ENCODE measurements at regions of chr14 and their contacts with region 1.

Region 1: DNA sequence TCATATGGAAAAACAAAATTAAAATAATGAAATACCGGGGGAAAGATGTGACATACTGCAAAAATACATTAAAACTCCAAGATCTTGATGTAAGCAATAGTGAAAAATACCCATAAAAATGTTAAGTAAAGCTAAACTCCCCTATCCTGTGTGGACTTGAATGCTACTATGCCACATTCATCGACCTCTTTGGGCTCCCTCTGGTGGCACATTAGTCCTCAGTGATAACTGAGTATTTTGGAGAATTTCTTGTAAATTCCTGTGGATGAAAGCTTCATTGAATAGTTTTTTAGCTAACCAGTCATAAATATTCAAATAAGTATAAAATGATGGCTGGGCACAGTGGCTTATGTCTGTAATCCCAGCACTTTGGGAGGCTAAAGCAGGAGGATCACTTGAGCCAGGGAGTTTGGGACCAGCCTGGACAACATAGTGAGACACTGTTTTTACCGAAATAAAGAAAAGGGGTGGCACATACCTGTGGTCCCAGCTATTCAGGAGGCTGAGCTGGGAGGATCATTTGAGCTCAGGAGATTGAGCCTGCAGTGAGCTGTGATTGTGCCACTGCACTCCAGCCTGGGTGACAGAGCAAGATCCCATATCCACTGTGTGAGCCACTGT is 42.4 kb upstream of the SGPP1 start:
- DNase-seq: peak in 1 of 2 experiments; percentile 61
- ATAC-seq: peak; percentile 93 to 96
- H3K4me3 ChIP-seq: no peak overlapping the region
- H3K27ac ChIP-seq: no peak overlapping the region
- H3K4me1 ChIP-seq: peaks cover 5% of the 10 kb centered on the region; the same call in 1 of the 3 replicates
- CTCF ChIP-seq: peak; percentile 79
- EP300 ChIP-seq: no peak
- POLR2A ChIP-seq: no peak
- RAD21 ChIP-seq: peak; percentile 74 to 77

Region 2: GRCh38 chr14:63388763-63389431 is 381.4 kb before region 1 on chr14:
- CTCF ChIA-PET with region 1: interaction called, 10 read pairs
- POLR2A ChIA-PET with region 1: no interaction called
- DNase-seq: peak; percentile 20 to 65
- ATAC-seq: peak; percentile 94 to 98
- H3K4me3 ChIP-seq: no peak overlapping the region
- H3K27ac ChIP-seq: no peak overlapping the region
- H3K4me1 ChIP-seq: no peaks in the 10 kb centered on the region
- CTCF ChIP-seq: peak; percentile 86
- EP300 ChIP-seq: no peak
- POLR2A ChIP-seq: no peak
- RAD21 ChIP-seq: peak; percentile 91 to 92

Region 3: DNA sequence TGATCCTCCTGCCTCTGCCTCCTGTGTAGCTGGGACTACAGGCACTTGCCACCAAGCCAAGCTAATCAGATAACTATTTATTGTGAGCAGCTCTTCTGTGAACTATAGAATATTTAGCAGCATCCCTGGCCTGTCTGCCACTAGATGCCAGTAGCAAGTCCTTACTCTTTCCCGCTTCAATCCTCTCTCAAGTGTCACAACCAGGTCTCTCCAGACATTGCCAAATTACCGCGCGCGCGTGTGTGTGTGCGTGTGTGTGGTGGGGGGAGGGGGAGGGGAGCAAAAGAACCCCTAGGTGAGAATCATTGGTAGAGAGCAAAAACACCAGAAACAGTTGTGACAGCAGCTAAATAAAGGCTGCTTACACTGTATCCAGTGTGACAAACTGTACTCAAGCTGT is 277.1 kb before region 1 on chr14:
- CTCF ChIA-PET with region 1: interaction called, 3 read pairs
- POLR2A ChIA-PET with region 1: interaction called, 10 read pairs
- DNase-seq: peak in 1 of 2 experiments; percentile 72
- ATAC-seq: peak; percentile 89 to 91
- H3K4me3 ChIP-seq: no peak overlapping the region
- H3K27ac ChIP-seq: peak overlapping the region in 1 of 2 experiments; percentile 25; a peak in 1 of 6 replicates
- H3K4me1 ChIP-seq: peaks cover 29% of the 10 kb centered on the region
- CTCF ChIP-seq: peak; percentile 26; the same call in 2 of the 3 replicates
- EP300 ChIP-seq: no peak
- POLR2A ChIP-seq: no peak
- RAD21 ChIP-seq: peak in 1 of 2 experiments; percentile 25; a peak in 2 of 5 replicates

Region 4: DNA sequence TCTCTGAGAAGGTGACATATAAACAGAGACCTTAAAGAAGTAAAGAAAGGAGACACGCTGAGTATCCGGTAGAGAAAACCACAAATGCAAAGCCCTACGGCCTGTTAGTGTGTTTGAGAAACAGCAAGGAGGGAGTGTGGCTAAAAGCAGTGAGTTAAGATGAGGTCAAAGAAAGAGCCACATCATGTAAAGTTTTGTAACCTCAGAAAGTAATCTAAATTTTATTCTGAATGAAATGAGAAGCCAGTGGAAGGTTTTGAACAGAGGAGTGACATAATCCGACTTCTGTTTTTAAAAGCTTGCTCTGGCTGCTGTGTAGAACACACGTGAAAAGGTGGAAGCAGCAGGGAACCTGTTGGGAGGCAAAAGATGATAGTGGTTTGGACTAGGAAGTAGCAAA is 259.8 kb before region 1 on chr14:
- CTCF ChIA-PET with region 1: no interaction called
- POLR2A ChIA-PET with region 1: no interaction called
- DNase-seq: no peak
- ATAC-seq: no peak
- H3K4me3 ChIP-seq: no peak overlapping the region
- H3K27ac ChIP-seq: no peak overlapping the region
- H3K4me1 ChIP-seq: peaks cover 19% of the 10 kb centered on the region
- CTCF ChIP-seq: no peak
- EP300 ChIP-seq: no peak
- POLR2A ChIP-seq: no peak
- RAD21 ChIP-seq: no peak

Region 5: GRCh38 chr14:63632932-63633514 is 137.3 kb before region 1 on chr14:
- CTCF ChIA-PET with region 1: interaction called, 15 read pairs
- POLR2A ChIA-PET with region 1: no interaction called
- DNase-seq: peak; percentile 30 to 43
- ATAC-seq: peak in 1 of 2 experiments; percentile 82; a peak in 3 of 6 replicates
- H3K4me3 ChIP-seq: no peak overlapping the region
- H3K27ac ChIP-seq: no peak overlapping the region
- H3K4me1 ChIP-seq: no peaks in the 10 kb centered on the region
- CTCF ChIP-seq: peak; percentile 63
- EP300 ChIP-seq: no peak
- POLR2A ChIP-seq: no peak
- RAD21 ChIP-seq: peak; percentile 43 to 54; a peak in 4 of 5 replicates

Region 6: DNA sequence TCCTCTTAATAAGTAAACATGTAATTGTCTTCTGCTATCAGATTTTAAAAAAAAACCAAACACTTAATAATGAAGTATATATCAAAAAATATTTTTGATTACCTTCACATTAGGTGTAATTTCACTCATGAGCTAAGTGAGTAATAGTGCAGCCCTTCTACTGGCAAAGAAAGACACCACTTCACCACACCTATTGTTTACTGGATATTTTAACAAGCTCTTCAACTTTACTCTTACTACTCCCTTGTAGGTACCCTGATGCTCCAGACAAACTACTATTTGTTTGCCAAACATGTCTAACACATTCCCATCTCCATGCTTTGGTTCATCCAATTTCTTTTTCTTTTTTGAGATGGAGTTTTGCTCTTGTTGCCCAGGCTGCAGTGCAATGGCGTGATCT is 91.8 kb before region 1 on chr14:
- CTCF ChIA-PET with region 1: no interaction called
- POLR2A ChIA-PET with region 1: no interaction called
- DNase-seq: no peak
- ATAC-seq: no peak
- H3K4me3 ChIP-seq: no peak overlapping the region
- H3K27ac ChIP-seq: no peak overlapping the region
- H3K4me1 ChIP-seq: peaks cover 9% of the 10 kb centered on the region; the same call in 1 of the 3 replicates
- CTCF ChIP-seq: no peak
- EP300 ChIP-seq: no peak
- POLR2A ChIP-seq: no peak
- RAD21 ChIP-seq: no peak

Region 7: GRCh38 chr14:63727774-63728728 is 42.2 kb before region 1 on chr14 and contains the start of gene SGPP1:
- CTCF ChIA-PET with region 1: interaction called, 10 read pairs
- POLR2A ChIA-PET with region 1: no interaction called
- DNase-seq: peak; percentile 80 to 85
- ATAC-seq: peak; percentile 86 to 87
- H3K4me3 ChIP-seq: peak within 1 kb of the TSS; percentile 71
- H3K27ac ChIP-seq: peak within 1 kb of the TSS; percentile 82 to 92
- H3K4me1 ChIP-seq: peaks cover 15% of the 10 kb centered on the region
- CTCF ChIP-seq: peak; percentile 28; the same call in 2 of the 3 replicates
- EP300 ChIP-seq: 0 out of 5 replicates have a peak, but pooled peaks of 1 of the 2 experiments have one; percentile 14
- POLR2A ChIP-seq: peak; percentile 86
- RAD21 ChIP-seq: 0 out of 5 replicates have a peak, but pooled peaks of 1 of the 2 experiments have one; percentile 23
- polyA plus RNA-seq, gene SGPP1: 18.9 and 28.2 TPM in 2 replicates

Region 8: GRCh38 chr14:63752513-63753169 is 17.7 kb before region 1 on chr14:
- CTCF ChIA-PET with region 1: interaction called, 22 read pairs
- POLR2A ChIA-PET with region 1: interaction called, 6 read pairs
- DNase-seq: peak in 1 of 2 experiments; percentile 73
- ATAC-seq: peak; percentile 67 to 94
- H3K4me3 ChIP-seq: no peak overlapping the region
- H3K27ac ChIP-seq: peak overlapping the region in 1 of 2 experiments; percentile 38; a peak in 4 of 6 replicates
- H3K4me1 ChIP-seq: peaks cover 10% of the 10 kb centered on the region; the same call in 2 of the 3 replicates
- CTCF ChIP-seq: no peak
- EP300 ChIP-seq: no peak
- POLR2A ChIP-seq: no peak
- RAD21 ChIP-seq: no peak

Region 9: GRCh38 chr14:63982156-63982555 is 211.9 kb after region 1 on chr14:
- CTCF ChIA-PET with region 1: no interaction called
- POLR2A ChIA-PET with region 1: no interaction called
- DNase-seq: no peak
- ATAC-seq: no peak
- H3K4me3 ChIP-seq: no peak overlapping the region
- H3K27ac ChIP-seq: no peak overlapping the region
- H3K4me1 ChIP-seq: no peaks in the 10 kb centered on the region
- CTCF ChIP-seq: no peak
- EP300 ChIP-seq: no peak
- POLR2A ChIP-seq: no peak
- RAD21 ChIP-seq: no peak